ENCODE measurements at regions of chrX and their contacts with region 1.

Region 1: DNA sequence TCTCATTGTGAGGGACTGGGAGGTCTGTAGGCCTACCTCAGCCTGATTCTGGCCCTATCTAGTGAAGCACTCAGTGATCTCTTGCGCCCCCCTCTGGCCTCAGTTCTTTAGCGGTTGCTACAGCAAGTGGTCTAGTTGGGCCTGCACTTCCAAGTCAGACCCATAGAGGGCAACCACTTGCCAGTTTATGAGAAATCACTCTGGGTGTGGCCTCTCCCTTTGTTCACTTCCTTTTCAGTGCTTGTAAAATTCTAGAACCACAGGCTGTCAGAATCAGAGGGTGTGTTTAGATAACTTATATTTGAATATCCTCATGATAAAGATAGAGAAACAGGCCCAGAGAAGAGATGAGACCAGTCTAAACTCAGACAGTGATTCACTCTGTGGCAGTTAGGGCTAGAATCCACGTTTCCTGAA is 60.9 kb upstream of the LAS1L start:
- DNase-seq: peak; percentile 94 to 100
- ATAC-seq: peak; percentile 97

Region 2: GRCh38 chrX:65300104-65300809 is 295.2 kb before region 1 on chrX:
- intact Hi-C with region 1: no loop called
- DNase-seq: no peak
- ATAC-seq: no peak

Region 3: DNA sequence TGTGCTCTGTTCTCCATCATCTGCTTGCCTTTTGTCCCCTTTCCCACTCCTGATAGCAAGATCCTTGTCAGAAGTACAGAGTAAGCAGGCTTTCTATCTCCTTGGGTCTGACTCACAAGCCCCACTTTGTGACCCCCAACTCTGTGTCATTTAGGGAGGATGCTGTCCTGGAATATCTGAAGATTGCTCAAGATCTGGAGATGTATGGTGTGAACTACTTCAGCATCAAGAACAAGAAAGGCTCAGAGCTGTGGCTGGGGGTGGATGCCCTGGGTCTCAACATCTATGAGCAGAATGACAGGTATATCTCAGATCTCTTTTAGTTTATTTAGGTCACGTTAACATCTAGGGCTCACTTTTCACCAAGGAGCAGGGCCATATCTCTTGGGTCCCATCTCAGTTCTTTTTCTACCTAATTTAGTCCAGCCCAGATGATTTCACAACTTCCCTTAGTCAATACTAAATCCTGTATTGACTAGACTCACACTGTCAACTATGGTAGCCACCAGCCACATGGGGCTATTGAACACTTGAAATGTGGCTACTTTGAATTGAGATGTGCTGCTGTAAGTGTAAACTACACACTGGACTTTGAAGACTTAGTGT is 136.3 kb after region 1 on chrX:
- intact Hi-C with region 1: loop called in 1 of 2 experiments (anchors 10 kb)
- DNase-seq: no peak
- ATAC-seq: no peak

Region 4: GRCh38 chrX:65894133-65894532 is 298.7 kb after region 1 on chrX:
- intact Hi-C with region 1: no loop called
- DNase-seq: no peak
- ATAC-seq: no peak

Region 5: DNA sequence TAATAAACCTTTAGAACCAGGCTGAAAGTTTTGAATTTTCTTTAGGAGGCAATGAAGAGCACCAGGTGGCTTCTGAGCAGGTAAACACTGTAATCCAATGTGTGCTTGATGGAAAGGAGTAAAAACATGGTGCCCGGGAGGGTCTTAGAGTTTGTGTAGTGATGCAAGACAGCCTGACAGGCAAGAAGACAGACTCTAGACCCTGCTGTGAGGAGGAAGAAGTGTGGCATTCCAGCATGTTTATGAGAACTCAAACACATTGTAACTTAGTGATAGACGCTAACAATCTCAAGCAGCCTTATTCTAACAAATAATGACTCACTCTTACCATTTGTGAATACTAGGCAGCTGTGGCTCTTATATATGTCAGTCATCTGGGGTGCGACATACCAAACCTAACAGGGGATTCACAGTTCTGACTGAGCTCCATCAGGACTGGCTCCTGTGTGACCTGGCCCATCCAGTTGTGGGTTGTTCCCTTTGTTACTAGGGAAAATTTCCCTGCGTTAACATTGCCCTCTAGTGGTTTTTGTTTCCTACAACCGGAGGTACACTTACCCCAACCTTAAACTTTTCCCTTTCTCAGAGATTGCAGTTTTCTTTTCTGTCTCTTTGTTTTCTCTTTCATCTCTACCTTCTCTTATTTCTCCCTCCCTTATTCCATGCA is 390.6 kb after region 1 on chrX:
- intact Hi-C with region 1: loop called in 1 of 2 experiments (anchors 5 kb)
- DNase-seq: no peak
- ATAC-seq: peak; percentile 94